Activated CD4-positive, alpha-beta T cell treated with anti-CD3 and anti-CD28 coated beads for 36 hours (primary cell): ENCODE measurements at regions of chrX and their contacts with region 1.

Region 1: GRCh38 chrX:121579016-121579760 is 531.8 kb downstream of the GLUD2 start:
- DNase-seq: peak; percentile 43
- ATAC-seq: peak; percentile 64
- H3K4me3 Mint-ChIP-seq: no peak overlapping the region
- H3K27ac Mint-ChIP-seq: no peak overlapping the region
- H3K4me1 Mint-ChIP-seq: peaks cover 10% of the 10 kb centered on the region
- H3K27me3 Mint-ChIP-seq: no peaks in the 10 kb centered on the region

Region 2: DNA sequence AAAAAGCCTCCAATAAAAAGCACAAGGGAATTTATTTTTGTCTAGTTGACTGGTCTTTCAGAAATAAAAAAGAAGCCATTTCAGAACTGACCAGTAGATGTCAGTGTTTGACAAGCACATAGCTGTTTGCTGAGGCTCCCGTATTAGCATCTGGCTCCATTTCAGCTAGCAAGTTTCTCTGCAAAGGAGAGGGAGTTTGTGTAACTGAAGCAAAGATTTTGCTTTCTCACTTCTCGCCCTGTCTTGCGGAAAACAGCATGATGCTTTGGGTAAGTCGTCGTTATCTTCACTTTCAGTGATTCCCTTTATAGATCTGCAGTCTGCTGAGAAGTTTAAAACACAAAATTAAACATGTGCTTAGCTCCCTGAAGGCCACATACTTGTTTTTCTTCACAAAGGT is 789.1 kb before region 1 on chrX:
- CTCF ChIA-PET with region 1: interaction called, 3 read pairs
- POLR2A ChIA-PET with region 1: no interaction called
- intact Hi-C with region 1: loop called (anchors 1 kb)
- DNase-seq: peak; percentile 27
- ATAC-seq: peak; percentile 81
- H3K4me3 Mint-ChIP-seq: peak overlapping the region; percentile 50
- H3K27ac Mint-ChIP-seq: peak overlapping the region; percentile 95
- H3K4me1 Mint-ChIP-seq: peaks cover 28% of the 10 kb centered on the region
- H3K27me3 Mint-ChIP-seq: no peaks in the 10 kb centered on the region

Region 3: GRCh38 chrX:121000587-121000986 is 578.6 kb before region 1 on chrX:
- CTCF ChIA-PET with region 1: no interaction called
- POLR2A ChIA-PET with region 1: no interaction called
- intact Hi-C with region 1: loop called in 1 of 2 experiments (anchors 1 kb)
- DNase-seq: no peak
- ATAC-seq: peak; percentile 33
- H3K4me3 Mint-ChIP-seq: no peak overlapping the region
- H3K27ac Mint-ChIP-seq: no peak overlapping the region
- H3K4me1 Mint-ChIP-seq: peaks cover 2% of the 10 kb centered on the region
- H3K27me3 Mint-ChIP-seq: no peaks in the 10 kb centered on the region

Region 4: GRCh38 chrX:121823411-121823810 is 244.2 kb after region 1 on chrX:
- CTCF ChIA-PET with region 1: no interaction called
- POLR2A ChIA-PET with region 1: no interaction called
- intact Hi-C with region 1: no loop called
- DNase-seq: no peak
- ATAC-seq: no peak
- H3K4me3 Mint-ChIP-seq: no peak overlapping the region
- H3K27ac Mint-ChIP-seq: no peak overlapping the region
- H3K4me1 Mint-ChIP-seq: no peaks in the 10 kb centered on the region
- H3K27me3 Mint-ChIP-seq: no peaks in the 10 kb centered on the region